Endothelial cell of umbilical vein (primary cell): ENCODE measurements at regions of chr19 and their contacts with region 1.

Region 1: GRCh38 chr19:7562646-7563393 is 27.3 kb downstream of the PNPLA6 start:
- DNase-seq: no peak
- H3K4me3 ChIP-seq: no peak overlapping the region
- H3K27ac ChIP-seq: no peak overlapping the region
- H3K4me1 ChIP-seq: no peaks in the 10 kb centered on the region
- H3K27me3 ChIP-seq: no peaks in the 10 kb centered on the region
- CTCF ChIP-seq: no peak
- POLR2A ChIP-seq: no peak

Region 2: DNA sequence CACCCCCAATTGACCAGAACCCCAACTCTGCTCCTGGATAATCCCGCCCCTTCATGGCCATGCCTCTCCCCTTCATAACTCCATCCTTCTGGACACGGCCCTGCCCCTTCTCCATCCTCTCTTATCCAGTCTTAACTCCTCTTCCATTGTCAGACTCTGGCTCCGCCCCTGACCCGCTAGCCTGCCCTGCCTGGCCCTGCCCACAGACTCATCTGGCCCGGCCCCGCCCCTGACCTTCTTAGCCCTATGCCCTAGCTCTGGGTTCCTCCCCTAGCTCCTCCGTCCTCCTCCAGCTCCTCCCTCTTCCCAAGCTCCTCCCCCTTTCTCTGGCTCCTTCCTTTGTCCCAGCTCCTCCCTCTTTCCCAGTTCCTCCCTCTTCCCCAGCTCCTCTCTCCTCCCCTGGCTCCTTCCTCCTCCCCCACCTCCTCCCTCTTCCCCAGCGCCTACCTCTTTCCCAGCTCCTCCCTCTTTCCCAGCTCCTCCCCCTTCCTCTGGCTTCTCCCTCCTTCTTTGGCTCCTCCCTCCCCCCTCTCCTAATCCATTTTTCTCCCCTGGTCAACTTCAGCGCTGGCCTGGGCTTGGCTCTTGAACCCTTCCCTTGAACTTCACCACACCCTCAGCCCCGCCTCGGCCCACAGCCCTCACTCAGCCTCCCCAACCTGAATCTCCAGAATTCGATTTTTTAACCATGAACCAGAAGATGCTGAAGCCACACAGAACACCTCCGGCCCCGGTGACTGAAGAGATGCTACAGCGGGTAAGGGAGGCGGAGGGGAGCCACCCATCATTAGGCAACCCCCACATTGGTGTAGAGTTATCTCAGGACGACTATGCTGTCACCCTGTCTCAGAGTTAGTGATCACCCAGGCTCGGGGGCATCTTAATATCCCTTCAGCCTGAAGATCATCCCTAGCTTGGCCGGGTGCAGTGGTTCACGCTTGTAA is 56.2 kb before region 1 on chr19:
- CTCF ChIA-PET with region 1: no interaction called
- POLR2A ChIA-PET with region 1: no interaction called
- dilution Hi-C with region 1: no loop called
- intact Hi-C with region 1: no loop called
- DNase-seq: peak; percentile 63
- H3K4me3 ChIP-seq: no peak overlapping the region
- H3K27ac ChIP-seq: no peak overlapping the region
- H3K4me1 ChIP-seq: no peaks in the 10 kb centered on the region
- H3K27me3 ChIP-seq: peaks cover 0 to 3% of the 10 kb centered on the region in 2 experiments
- CTCF ChIP-seq: no peak
- POLR2A ChIP-seq: no peak

Region 3: DNA sequence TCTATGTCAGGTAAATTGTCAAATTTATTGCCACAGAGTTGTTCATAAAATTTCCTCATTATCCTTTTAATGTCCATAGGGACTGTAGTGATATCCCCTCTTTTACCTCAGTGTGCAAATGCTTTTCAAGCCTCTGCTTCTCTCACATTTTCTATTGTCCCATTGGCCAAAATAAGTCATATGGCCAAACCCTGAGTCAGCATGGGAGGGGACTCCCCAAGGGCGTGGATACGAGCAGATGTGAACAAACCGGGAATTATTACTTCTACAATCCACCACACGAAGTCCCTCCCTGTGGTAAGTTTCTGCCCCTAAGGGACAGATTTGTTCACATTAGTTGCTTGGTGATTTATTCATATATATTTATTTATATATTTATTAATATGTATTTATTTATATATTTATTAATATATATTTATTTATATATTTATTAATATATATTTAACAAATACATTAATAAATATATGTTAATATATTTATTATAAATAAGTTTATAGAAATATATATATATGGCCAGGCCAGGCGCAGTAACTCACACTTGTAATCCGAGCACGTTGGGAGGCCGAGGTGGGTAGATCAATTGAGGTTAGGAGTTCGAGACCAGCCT is 12.7 kb after region 1 on chr19:
- CTCF ChIA-PET with region 1: interaction called, 29 read pairs
- POLR2A ChIA-PET with region 1: no interaction called
- dilution Hi-C with region 1: no loop called
- intact Hi-C with region 1: no loop called
- DNase-seq: no peak
- H3K4me3 ChIP-seq: no peak overlapping the region
- H3K27ac ChIP-seq: no peak overlapping the region
- H3K4me1 ChIP-seq: no peaks in the 10 kb centered on the region
- H3K27me3 ChIP-seq: no peaks in the 10 kb centered on the region
- CTCF ChIP-seq: no peak
- POLR2A ChIP-seq: no peak

Region 4: DNA sequence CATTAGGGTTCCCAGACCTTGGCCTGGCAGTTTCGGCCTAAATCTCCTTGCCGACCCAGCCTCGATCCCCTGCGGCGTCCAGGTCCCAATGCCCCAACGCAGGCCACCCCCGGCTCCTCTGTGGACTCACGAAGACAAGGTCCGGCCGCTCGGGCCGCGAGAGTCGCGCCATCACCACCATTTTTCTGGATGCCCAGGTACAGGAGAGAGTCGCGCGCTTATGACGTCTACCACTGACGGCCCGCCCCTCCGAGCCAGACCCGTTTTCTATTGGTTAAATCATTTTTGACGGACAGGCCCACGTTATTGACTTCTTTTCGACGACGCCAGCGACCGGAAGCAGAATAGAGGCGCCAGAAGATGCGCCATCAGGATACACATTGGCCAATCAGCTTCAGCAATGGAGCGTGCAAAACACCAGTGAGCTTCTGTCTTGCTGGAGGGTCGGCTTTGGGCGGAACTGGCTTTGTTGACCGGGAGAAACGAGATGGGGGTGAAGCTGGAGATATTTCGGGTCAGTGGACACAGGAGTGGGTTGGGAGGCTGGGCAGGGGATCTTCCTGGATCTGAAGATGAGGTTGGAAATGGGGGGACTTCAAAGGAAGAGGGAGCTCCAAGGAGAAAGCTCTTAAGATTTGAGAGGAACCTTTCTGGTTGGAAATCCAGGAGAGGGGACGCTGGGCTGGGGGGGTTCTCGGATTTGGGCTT is 66.7 kb after region 1 on chr19 and contains the starts of genes PET100 and XAB2:
- CTCF ChIA-PET with region 1: interaction called, 11 read pairs
- POLR2A ChIA-PET with region 1: no interaction called
- dilution Hi-C with region 1: no loop called
- intact Hi-C with region 1: no loop called
- DNase-seq: peak; percentile 99
- H3K4me3 ChIP-seq: peak within 1 kb of the TSS; percentile 91 to 96 (median 92)
- H3K27ac ChIP-seq: peak within 1 kb of the TSS; percentile 94
- H3K4me1 ChIP-seq: peaks cover 16% of the 10 kb centered on the region
- H3K27me3 ChIP-seq: no peaks in the 10 kb centered on the region
- CTCF ChIP-seq: no peak
- POLR2A ChIP-seq: no peak
- total RNA-seq, gene PET100: 162 and 172 TPM in 2 replicates
- total RNA-seq, gene XAB2: 37.0 and 37.3 TPM in 2 replicates

Region 5: DNA sequence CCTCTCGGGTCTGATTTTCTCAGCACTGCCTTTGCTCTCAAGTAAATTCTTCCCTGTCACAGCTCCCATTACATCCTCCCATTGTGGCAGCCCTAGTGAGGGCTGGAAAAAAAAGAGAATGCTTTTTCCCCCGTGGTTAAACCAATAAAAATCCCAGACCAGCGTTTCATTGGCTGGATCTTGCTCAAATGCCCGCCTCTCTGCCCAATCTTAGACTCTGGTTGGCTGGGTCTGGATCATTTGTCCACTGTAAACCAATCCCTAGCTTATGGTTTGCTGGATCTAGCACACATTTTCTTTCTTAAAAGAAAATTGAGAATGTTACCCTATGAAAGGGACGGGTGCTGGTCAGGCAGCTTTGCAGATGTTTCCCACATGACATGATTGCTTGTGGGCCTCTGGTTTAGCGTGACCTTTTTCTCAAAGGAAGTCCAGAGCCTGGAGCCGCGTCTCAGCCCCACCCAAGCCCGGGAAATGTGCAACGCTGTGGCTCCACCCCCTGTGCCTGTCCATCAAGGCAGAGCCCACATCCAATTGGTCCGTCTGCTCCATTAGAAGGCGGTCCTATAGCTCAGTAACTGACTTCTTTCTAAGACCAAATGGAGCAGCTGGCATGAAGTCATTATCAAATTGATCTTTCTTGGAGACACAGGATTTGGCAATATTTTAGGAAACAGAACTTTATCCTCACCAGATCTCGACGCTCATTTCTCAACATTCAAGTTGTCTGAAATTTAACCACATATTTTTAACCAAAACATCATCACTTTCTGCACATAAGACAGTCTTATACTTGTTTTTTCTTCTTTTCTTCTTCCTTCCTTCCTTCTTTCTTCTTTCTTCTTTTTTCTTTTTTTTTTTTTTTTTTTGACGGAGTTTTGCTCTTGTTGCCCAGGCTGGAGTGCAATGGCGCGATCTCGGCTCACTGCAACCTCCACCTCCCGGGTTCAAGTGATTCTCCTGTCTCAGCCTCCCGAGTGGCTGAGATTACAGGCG is 111.5 kb after region 1 on chr19:
- CTCF ChIA-PET with region 1: interaction called, 24 read pairs
- POLR2A ChIA-PET with region 1: no interaction called
- dilution Hi-C with region 1: no loop called
- intact Hi-C with region 1: no loop called
- DNase-seq: peak; percentile 60
- H3K4me3 ChIP-seq: no peak overlapping the region
- H3K27ac ChIP-seq: no peak overlapping the region
- H3K4me1 ChIP-seq: no peaks in the 10 kb centered on the region
- H3K27me3 ChIP-seq: peaks cover 8 to 12% of the 10 kb centered on the region in 2 experiments
- CTCF ChIP-seq: no peak
- POLR2A ChIP-seq: no peak

Region 6: DNA sequence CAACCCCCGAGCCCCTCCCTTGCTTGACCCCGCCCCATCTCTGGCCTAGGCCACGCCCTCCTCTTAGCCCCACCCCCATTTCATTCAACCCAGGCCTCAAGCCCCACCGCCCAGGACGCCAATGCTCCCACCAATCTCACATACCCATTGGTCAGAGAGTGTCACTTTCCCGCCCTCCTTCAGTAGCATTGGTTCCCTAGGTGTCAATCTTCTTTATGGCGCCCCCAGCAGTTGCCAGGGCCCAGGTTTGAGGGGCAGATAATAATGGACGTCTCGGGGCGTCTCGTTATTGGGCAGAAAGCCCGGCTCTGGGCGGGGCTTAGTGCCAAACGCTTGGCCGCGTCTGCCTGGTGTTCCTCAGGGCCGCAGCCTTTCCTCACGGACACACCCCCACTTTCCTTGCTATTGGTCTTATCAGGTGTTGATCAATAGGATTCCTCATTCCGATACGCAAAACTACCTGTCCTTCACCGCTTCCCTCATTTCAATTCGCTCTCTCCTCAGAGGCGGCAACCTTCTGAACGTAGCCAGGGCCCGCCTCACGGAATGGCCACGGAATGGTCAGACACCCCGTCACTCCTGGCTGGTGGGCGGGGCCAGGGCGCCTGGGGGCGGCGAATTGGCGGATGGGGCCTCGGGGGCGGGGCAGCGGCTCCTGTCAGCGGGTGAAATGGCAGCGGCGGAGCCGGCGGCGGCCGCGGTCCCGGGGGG is 266.9 kb after region 1 on chr19 and contains the start of gene EVI5L:
- CTCF ChIA-PET with region 1: interaction called, 29 read pairs
- POLR2A ChIA-PET with region 1: no interaction called
- dilution Hi-C with region 1: no loop called
- intact Hi-C with region 1: loop called (anchors 5 kb)
- DNase-seq: peak; percentile 100
- H3K4me3 ChIP-seq: peak within 1 kb of the TSS; percentile 35 to 89 (median 55)
- H3K27ac ChIP-seq: peak within 1 kb of the TSS; percentile 13
- H3K4me1 ChIP-seq: peaks cover 11% of the 10 kb centered on the region
- H3K27me3 ChIP-seq: peaks cover 0 to 3% of the 10 kb centered on the region in 2 experiments
- CTCF ChIP-seq: no peak
- POLR2A ChIP-seq: no peak
- total RNA-seq, gene EVI5L: 13.5 and 18.3 TPM in 2 replicates